GM12878 (cell line): ENCODE measurements at regions of chr3 and their contacts with region 1.

Region 1: DNA sequence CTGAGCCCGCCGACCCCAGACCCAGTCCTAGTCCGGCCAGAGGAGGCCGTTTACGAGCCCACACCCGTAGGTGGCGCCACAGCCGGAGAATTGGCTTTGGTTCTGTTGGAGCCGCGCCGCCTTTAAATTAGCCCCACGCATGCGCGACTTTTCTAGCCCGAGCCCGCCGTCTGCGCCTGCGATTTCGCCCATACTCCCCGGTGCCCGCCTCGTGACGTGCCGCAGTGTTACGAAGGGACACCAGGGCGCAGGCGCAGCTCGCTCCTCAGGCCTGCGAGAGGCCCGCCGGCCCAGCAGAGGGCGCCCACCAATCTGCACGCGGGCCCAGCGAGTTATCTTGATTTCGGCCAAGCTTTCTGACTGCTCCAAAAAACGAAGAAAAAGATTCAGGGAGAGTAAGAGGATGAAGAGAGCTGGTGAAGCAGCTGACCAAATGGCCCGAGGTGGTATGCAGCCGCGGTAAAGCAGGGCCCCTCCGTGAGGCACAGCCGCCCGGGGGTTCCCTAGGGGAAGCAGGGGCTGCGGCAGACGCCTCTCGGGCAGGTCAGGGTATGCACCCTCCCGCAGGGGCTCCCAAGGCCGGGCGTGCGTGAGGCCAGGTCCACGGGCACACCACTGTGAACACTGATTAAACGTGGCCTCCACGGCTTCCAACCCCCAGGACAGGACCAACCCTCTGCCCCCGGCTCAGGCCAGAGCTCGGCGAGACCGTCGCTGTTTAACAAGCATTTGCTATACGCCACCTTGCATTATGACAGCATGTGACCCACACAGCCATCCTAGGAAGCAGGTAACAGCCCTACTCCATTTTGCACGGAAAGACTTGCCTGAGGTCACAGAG is 32.8 kb downstream of the RPN1 start:
- DNase-seq: peak; percentile 85
- ATAC-seq: peak; percentile 98
- H3K4me3 ChIP-seq: peak overlapping the region; percentile 80
- H3K27ac ChIP-seq: peak overlapping the region; percentile 60
- H3K4me1 ChIP-seq: peaks cover 14% of the 10 kb centered on the region
- H3K27me3 ChIP-seq: no peaks in the 10 kb centered on the region
- CTCF ChIP-seq: peak; percentile 77 to 96 (median 80)
- EP300 ChIP-seq: no peak
- POLR2A ChIP-seq: peak; percentile 72
- RAD21 ChIP-seq: peak; percentile 71

Region 2: GRCh38 chr3:128559486-128560225 is 58.1 kb before region 1 on chr3:
- CTCF ChIA-PET with region 1: no interaction called
- POLR2A ChIA-PET with region 1: no interaction called
- RAD21 ChIA-PET with region 1: no interaction called
- SMC1A ChIA-PET with region 1: no interaction called
- in situ Hi-C with region 1: no loop called
- intact Hi-C with region 1: no loop called
- DNase-seq: no peak
- ATAC-seq: no peak
- H3K4me3 ChIP-seq: no peak overlapping the region
- H3K27ac ChIP-seq: no peak overlapping the region
- H3K4me1 ChIP-seq: no peaks in the 10 kb centered on the region
- H3K27me3 ChIP-seq: peaks cover 5 to 6% of the 10 kb centered on the region in 2 experiments
- CTCF ChIP-seq: no peak
- EP300 ChIP-seq: no peak
- POLR2A ChIP-seq: no peak
- RAD21 ChIP-seq: no peak

Region 3: GRCh38 chr3:128607710-128608048 is 10.1 kb before region 1 on chr3:
- CTCF ChIA-PET with region 1: interaction called, 24 read pairs
- POLR2A ChIA-PET with region 1: no interaction called
- RAD21 ChIA-PET with region 1: no interaction called
- SMC1A ChIA-PET with region 1: interaction called, 3 read pairs
- in situ Hi-C with region 1: no loop called
- intact Hi-C with region 1: no loop called
- DNase-seq: no peak
- ATAC-seq: no peak
- H3K4me3 ChIP-seq: no peak overlapping the region
- H3K27ac ChIP-seq: no peak overlapping the region
- H3K4me1 ChIP-seq: no peaks in the 10 kb centered on the region
- H3K27me3 ChIP-seq: no peaks in the 10 kb centered on the region
- CTCF ChIP-seq: no peak
- EP300 ChIP-seq: no peak
- POLR2A ChIP-seq: no peak
- RAD21 ChIP-seq: no peak

Region 4: GRCh38 chr3:128674161-128674784 is 56.5 kb after region 1 on chr3:
- CTCF ChIA-PET with region 1: interaction called, 6 read pairs
- POLR2A ChIA-PET with region 1: interaction called, 6 read pairs
- RAD21 ChIA-PET with region 1: no interaction called
- SMC1A ChIA-PET with region 1: interaction called, 7 read pairs
- in situ Hi-C with region 1: no loop called
- intact Hi-C with region 1: loop called (anchors 2 kb)
- DNase-seq: no peak
- ATAC-seq: no peak
- H3K4me3 ChIP-seq: peak overlapping the region; percentile 72
- H3K27ac ChIP-seq: peak overlapping the region; percentile 92
- H3K4me1 ChIP-seq: peaks cover 12% of the 10 kb centered on the region
- H3K27me3 ChIP-seq: no peaks in the 10 kb centered on the region
- CTCF ChIP-seq: no peak
- EP300 ChIP-seq: no peak
- POLR2A ChIP-seq: no peak
- RAD21 ChIP-seq: no peak

Region 5: GRCh38 chr3:128725932-128726690 is 108.3 kb after region 1 on chr3 and contains the start of gene RAB7A:
- CTCF ChIA-PET with region 1: interaction called, 11 read pairs
- POLR2A ChIA-PET with region 1: no interaction called
- RAD21 ChIA-PET with region 1: no interaction called
- SMC1A ChIA-PET with region 1: interaction called, 4 read pairs
- in situ Hi-C with region 1: no loop called
- intact Hi-C with region 1: no loop called
- DNase-seq: peak; percentile 96
- ATAC-seq: peak; percentile 92
- H3K4me3 ChIP-seq: peak within 1 kb of the TSS; percentile 79
- H3K27ac ChIP-seq: peak within 1 kb of the TSS; percentile 86
- H3K4me1 ChIP-seq: peaks cover 12% of the 10 kb centered on the region
- H3K27me3 ChIP-seq: no peaks in the 10 kb centered on the region
- CTCF ChIP-seq: 0 out of 6 replicates have a peak, but pooled peaks of 1 of the 3 experiments have one; percentile 2
- EP300 ChIP-seq: no peak
- POLR2A ChIP-seq: peak; percentile 95
- RAD21 ChIP-seq: no peak
- polyA plus RNA-seq, gene RAB7A: 40.3 to 43.0 TPM

Region 6: DNA sequence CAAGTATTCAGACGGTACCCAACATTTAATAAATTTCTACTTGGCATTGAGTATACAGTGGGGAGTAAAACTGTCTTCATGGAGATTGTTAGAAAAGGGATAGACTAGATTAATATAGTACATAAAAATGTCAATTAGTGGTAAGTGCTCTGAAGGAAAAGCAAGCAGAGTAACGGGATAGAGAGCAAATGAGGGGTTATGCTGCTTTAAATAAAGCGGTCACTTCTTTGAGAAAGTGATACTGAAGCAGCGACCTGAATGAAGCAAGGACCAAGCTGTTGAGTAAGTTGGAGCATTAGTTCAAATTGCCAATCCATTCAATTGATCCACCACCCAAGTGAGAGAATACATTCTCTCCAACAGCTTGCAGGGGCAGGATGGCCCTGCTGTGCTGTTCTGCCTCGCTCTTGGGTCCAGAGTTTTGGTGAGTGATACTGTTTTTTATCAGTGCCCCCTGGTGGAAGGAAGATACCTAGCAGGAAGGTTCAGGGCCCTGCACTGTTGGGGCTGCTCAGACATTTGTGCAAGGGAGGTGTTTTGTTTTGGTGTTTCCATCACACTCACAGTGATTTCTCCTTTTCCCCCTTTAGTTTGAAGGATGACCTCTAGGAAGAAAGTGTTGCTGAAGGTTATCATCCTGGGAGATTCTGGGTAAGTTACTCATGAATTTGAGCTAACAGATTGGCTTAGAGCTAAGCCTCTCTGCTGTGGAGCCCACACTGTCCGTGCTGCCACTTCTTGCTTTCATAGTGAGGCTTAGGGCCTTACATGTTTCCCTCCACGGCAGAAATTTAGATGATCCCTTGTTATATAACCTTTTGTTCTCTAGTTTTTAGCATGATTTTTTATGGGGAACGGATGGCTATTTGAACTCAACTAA is 177.2 kb after region 1 on chr3:
- CTCF ChIA-PET with region 1: interaction called, 16 read pairs
- POLR2A ChIA-PET with region 1: interaction called, 3 read pairs
- RAD21 ChIA-PET with region 1: interaction called, 9 read pairs
- SMC1A ChIA-PET with region 1: interaction called, 6 read pairs
- in situ Hi-C with region 1: no loop called
- intact Hi-C with region 1: loop called (anchors 1 kb)
- DNase-seq: no peak
- ATAC-seq: peak; percentile 98
- H3K4me3 ChIP-seq: no peak overlapping the region
- H3K27ac ChIP-seq: no peak overlapping the region
- H3K4me1 ChIP-seq: peaks cover 39% of the 10 kb centered on the region
- H3K27me3 ChIP-seq: no peaks in the 10 kb centered on the region
- CTCF ChIP-seq: peak; percentile 76 to 79 (median 79)
- EP300 ChIP-seq: no peak
- POLR2A ChIP-seq: no peak
- RAD21 ChIP-seq: peak; percentile 80

Region 7: DNA sequence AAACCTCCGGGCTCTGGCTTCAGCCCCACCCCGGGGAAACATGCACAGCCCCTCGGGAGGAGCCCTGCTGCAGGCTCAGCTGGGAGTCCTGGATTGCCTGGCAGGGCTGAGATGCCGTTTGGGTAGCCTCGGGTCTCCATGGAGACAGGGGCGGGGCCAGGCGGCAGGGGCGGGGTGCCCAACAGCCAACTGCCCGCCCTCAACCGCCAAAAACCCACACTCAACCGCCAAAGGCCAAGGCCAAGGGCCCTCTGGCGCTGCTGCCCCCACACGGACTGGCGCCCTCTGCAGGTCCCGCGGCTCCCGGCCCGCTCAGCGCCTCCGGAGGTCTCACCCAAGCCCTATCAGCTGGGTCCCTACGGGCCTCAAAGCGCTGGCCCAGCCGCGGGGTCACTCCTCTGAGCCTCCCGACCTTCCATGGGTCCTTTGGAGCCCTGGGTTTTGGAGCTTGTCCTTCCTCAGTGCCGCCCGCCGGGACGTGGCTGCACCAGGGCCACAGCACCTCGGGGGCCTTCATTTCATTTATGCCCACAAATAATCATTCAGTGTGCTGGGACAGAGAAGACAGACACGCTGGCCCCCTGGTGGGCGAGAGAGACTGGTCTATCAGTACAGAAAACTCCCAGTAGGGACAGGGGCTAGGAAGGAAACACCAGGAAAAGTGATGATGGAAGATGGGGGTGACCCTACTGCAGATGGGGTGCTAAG is 228.2 kb after region 1 on chr3:
- CTCF ChIA-PET with region 1: interaction called, 17 read pairs
- POLR2A ChIA-PET with region 1: no interaction called
- RAD21 ChIA-PET with region 1: interaction called, 3 read pairs
- SMC1A ChIA-PET with region 1: no interaction called
- in situ Hi-C with region 1: no loop called
- intact Hi-C with region 1: no loop called
- DNase-seq: peak; percentile 7
- ATAC-seq: peak; percentile 97
- H3K4me3 ChIP-seq: peak overlapping the region; percentile 46
- H3K27ac ChIP-seq: no peak overlapping the region
- H3K4me1 ChIP-seq: peaks cover 4% of the 10 kb centered on the region
- H3K27me3 ChIP-seq: no peaks in the 10 kb centered on the region
- CTCF ChIP-seq: peak; percentile 48 to 78 (median 63)
- EP300 ChIP-seq: no peak
- POLR2A ChIP-seq: 0 out of 2 replicates have a peak, but pooled peaks have one; percentile 48
- RAD21 ChIP-seq: peak; percentile 58